ENCODE measurements at regions of chr6 and their contacts with region 1.

Region 1: DNA sequence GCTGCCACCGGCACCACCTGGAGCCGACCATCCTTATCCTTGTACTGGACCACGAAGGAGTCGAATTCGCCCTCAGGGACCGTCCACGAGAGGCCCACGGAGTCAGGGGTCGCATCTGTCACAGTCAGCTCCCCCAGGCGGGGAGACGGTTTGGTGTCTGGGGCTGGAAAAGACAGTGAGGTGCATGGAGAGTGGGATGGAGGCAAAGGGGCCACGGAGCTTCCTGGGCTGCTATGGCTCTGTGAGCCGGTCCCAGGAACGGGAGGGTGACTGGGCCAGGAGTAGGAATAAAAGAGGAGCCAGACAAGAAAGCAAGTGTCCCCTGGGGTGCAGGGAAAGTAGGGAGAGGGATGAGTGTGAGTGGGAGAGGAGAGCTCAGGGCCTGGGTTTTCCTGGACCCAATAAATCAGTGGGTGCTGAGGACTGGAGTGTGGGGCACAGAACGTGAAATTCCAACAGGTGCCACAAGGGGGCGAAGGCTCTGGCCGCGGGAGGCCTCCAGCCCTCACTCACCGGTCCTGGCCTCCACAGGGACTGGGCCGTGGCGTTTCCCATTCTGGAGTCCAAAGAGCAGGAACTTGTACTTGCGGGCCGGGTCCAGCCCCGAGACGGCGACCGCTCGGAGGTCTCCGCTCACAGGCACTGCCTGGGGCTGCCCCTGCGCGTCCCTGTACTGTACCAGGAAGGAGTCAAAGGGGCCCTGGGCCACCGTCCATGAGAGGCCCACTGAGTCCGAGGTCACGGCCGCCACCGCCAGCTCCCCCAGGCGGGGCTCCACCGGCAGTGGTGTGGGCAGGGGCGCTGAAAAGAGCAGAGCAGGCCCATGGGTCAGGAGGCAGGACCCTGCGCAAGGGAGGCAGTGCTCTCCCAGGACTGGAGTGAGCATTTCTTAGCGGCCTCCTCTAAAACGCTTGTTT is 9.9 kb downstream of the CYP21A2 start:
- DNase-seq: peak; percentile 80 to 93
- ATAC-seq: peak; percentile 80
- H3K4me3 ChIP-seq: no peak overlapping the region
- H3K27ac ChIP-seq: no peak overlapping the region
- H3K4me1 ChIP-seq: no peaks in the 10 kb centered on the region
- H3K27me3 ChIP-seq: no peaks in the 10 kb centered on the region

Region 2: DNA sequence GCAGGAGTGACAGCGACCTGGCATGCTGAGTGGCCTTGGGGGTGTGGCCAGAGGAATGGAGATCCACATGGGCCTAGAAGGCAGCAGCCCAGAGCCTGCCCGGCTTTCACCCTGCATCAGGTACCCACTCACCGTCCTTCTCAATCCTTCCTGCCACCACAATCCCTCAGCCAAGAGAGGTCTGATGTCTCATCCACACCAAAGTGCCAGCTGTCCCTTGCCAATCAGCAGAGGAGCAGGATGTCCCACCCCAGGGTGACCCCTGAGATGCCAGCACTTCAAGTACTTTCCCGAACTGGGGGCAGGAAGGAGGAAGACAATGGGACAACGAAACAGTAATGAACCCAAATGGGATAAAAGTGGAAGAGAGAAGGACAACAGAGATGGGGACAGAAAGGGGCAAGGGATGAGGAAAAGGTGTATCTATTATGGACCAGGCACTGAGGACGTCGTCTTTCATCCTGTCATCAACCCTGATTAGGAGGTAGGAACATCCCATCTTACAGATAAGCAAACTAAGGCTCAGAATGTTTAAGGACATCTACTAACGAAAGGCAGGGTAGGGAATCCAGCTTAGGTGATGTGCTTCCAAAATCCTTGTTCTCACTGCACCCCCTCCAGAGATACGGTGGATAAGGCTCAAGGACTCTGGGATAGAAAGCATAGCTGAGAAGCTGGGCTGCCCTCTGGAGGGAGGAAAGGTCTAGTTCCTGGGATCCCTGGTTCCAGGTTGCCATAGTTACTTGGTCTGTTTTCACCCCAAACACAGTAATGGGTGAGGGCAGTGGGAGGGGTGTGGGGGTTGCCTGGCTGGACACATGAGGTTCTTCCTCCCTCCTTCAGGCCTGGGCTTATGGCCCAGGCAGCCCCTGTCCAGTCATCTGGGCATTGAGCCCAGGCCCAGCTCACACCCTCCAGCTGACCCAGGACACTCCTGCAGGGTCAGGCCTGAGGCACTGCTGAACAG is 65.6 kb after region 1 on chr6:
- intact Hi-C with region 1: loop called in 1 of 2 experiments (anchors 1 kb)
- DNase-seq: peak; percentile 94 to 95
- ATAC-seq: peak; percentile 90
- H3K4me3 ChIP-seq: no peak overlapping the region
- H3K27ac ChIP-seq: peak overlapping the region in 1 of 2 donors; percentile 57
- H3K4me1 ChIP-seq: no peaks in the 10 kb centered on the region
- H3K27me3 ChIP-seq: no peaks in the 10 kb centered on the region

Region 3: DNA sequence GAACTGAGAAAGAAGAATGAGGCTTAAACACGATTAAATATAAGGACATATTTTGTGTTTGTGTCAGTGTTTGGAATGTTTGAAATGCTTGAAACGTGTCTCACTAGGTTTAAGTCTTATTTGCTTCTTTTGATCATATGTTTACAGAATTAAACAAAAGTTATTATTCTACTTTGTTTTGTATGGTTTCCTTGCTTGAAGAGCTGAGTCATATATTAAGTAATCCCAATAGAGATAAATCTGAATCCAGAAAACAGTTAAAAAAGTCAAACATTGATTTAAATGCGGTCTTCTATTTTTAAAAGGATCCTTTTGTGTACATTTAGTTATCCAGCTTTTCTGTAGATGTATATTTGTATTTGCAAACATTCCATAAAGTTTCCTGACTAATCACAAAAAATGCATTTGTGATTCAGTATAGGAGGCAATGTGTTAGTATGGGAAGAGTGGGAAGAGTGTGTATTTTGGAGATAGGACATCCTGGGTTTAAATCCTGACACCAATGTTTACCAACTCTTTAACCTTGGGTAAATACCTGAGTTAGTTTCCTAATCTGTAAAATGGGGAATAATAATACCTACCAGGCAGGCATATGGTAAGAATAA is 250.7 kb after region 1 on chr6:
- intact Hi-C with region 1: no loop called
- DNase-seq: no peak
- ATAC-seq: no peak
- H3K4me3 ChIP-seq: no peak overlapping the region
- H3K27ac ChIP-seq: no peak overlapping the region
- H3K4me1 ChIP-seq: no peaks in the 10 kb centered on the region
- H3K27me3 ChIP-seq: peaks cover 0 to 2% of the 10 kb centered on the region in 2 donors

Measured in aorta (tissue), 5 donors.